Prostate gland (tissue), 2 donors: ENCODE measurements at regions of chr17 and their contacts with region 1.

Region 1: GRCh38 chr17:40340880-40341807 is 23.4 kb downstream of the GJD3 start:
- DNase-seq: peak; percentile 87
- H3K4me3 ChIP-seq: peak overlapping the region; percentile 77 to 93
- H3K27ac ChIP-seq: peak overlapping the region; percentile 96 to 98
- H3K4me1 ChIP-seq: peaks cover 15% of the 10 kb centered on the region
- H3K27me3 ChIP-seq: no peaks in the 10 kb centered on the region
- CTCF ChIP-seq: peak in 2 of 4 experiments; percentile 31 to 41
- POLR2A ChIP-seq: peak; percentile 74

Region 2: GRCh38 chr17:40121181-40122135 is 219.7 kb before region 1 on chr17 and contains the start of gene MSL1:
- intact Hi-C with region 1: loop called (anchors 5 kb)
- DNase-seq: peak; percentile 85
- H3K4me3 ChIP-seq: peak within 1 kb of the TSS; percentile 100
- H3K27ac ChIP-seq: peak within 1 kb of the TSS; percentile 100
- H3K4me1 ChIP-seq: no peaks in the 10 kb centered on the region
- H3K27me3 ChIP-seq: no peaks in the 10 kb centered on the region
- CTCF ChIP-seq: no peak
- POLR2A ChIP-seq: peak; percentile 74
- total RNA-seq, gene MSL1: 77.0 to 112 TPM

Region 3: GRCh38 chr17:40317880-40318829 is 23.0 kb before region 1 on chr17:
- intact Hi-C with region 1: loop called (anchors 5 kb)
- DNase-seq: peak; percentile 98
- H3K4me3 ChIP-seq: peak overlapping the region; percentile 89 to 98
- H3K27ac ChIP-seq: peak overlapping the region; percentile 82 to 83
- H3K4me1 ChIP-seq: peaks cover 41% of the 10 kb centered on the region
- H3K27me3 ChIP-seq: no peaks in the 10 kb centered on the region
- CTCF ChIP-seq: peak in 1 of 4 experiments; percentile 9
- POLR2A ChIP-seq: peak; percentile 83